OCI-LY7 (cell line): ENCODE measurements at regions of chr6 and their contacts with region 1.

Region 1: GRCh38 chr6:6008648-6009421 is 2.1 kb upstream of the NRN1 start:
- DNase-seq: peak; percentile 95
- H3K4me3 ChIP-seq: peak overlapping the region; percentile 73
- H3K27ac ChIP-seq: peak overlapping the region; percentile 72
- H3K4me1 ChIP-seq: peaks cover 29% of the 10 kb centered on the region
- CTCF ChIP-seq: no peak

Region 2: GRCh38 chr6:4775584-4776494 is 1233.0 kb before region 1 on chr6 and contains the start of gene CDYL:
- CTCF ChIA-PET with region 1: no interaction called
- POLR2A ChIA-PET with region 1: no interaction called
- intact Hi-C with region 1: loop called (anchors 5 kb)
- DNase-seq: peak; percentile 92
- H3K4me3 ChIP-seq: peak within 1 kb of the TSS; percentile 74
- H3K27ac ChIP-seq: peak within 1 kb of the TSS; percentile 37
- H3K4me1 ChIP-seq: peaks cover 26% of the 10 kb centered on the region
- CTCF ChIP-seq: no peak
- total RNA-seq, gene CDYL: 33.6 and 51.4 TPM in 2 replicates

Region 3: GRCh38 chr6:5471044-5471443 is 537.8 kb before region 1 on chr6:
- CTCF ChIA-PET with region 1: no interaction called
- POLR2A ChIA-PET with region 1: interaction called, 3 read pairs
- intact Hi-C with region 1: loop called (anchors 10 kb)
- DNase-seq: peak; percentile 67
- H3K4me3 ChIP-seq: no peak overlapping the region
- H3K27ac ChIP-seq: no peak overlapping the region
- H3K4me1 ChIP-seq: peaks cover 7% of the 10 kb centered on the region
- CTCF ChIP-seq: peak; percentile 98

Region 4: DNA sequence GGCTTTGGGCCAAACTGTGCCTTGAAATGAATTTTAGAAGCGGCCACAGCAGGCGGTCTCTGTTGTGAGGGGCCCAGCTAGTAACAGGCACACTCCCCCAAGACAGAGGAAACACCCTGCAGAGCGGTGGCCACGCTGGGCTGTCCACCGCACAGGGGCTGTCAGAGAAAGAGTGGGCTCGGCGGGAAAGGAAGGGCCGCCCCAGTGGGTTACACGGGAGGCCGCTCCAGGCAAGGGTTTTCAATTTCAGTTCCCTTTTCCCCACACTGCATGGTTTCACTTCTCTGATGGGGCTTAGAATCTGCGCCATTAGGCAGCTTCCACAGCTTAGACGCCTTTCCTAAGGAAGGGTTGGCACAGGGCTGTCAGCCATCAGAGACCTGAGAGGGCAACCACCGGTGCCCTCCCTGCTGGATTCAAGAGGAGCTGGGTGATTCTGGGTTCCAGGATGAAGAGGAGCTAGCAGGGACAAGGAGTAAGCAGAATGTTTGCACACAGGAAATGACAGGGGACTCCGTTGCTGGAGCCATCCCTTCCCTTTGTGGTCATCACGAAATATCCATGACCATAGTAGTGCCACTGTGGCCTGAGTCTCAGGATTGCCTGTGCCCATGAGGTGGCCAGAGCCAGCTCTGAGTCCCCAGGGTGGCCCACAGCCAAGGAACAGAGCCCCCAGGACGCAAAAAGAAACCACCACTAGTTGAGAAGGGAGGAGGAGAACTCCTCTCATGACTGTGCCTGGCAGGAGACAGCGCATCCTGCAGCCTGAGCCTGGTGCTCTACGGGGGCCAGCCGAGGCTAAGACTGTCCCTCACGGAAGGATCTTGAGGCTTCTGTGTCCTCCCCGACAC is 284.8 kb before region 1 on chr6:
- CTCF ChIA-PET with region 1: no interaction called
- POLR2A ChIA-PET with region 1: no interaction called
- intact Hi-C with region 1: loop called (anchors 5 kb)
- DNase-seq: peak; percentile 86
- H3K4me3 ChIP-seq: peak overlapping the region; percentile 67
- H3K27ac ChIP-seq: peak overlapping the region; percentile 23
- H3K4me1 ChIP-seq: peaks cover 52% of the 10 kb centered on the region
- CTCF ChIP-seq: no peak

Region 5: GRCh38 chr6:6686748-6687601 is 678.1 kb after region 1 on chr6:
- CTCF ChIA-PET with region 1: no interaction called
- POLR2A ChIA-PET with region 1: no interaction called
- intact Hi-C with region 1: loop called (anchors 5 kb)
- DNase-seq: peak; percentile 97
- H3K4me3 ChIP-seq: peak overlapping the region; percentile 82
- H3K27ac ChIP-seq: peak overlapping the region; percentile 12
- H3K4me1 ChIP-seq: peaks cover 26% of the 10 kb centered on the region
- CTCF ChIP-seq: no peak

Region 6: DNA sequence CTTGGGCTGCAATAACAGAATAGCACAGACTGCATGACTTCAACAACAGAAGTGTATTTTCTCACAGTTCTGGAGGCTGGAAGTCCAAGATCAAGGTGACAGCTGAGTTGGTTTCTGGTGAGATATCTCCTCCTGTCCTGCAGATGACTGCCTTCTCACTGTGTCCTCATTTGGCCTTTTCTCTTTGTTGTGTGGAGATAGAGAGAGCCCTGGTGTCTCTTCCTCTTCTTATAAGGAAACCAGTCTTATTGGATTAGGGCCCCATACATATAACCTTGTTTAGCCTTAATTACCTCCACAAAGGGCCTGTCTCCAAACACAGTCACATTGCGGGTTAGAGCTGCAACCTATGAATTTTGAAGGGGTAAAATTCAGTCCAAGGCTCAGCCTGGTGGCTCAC is 1660.1 kb after region 1 on chr6:
- CTCF ChIA-PET with region 1: no interaction called
- POLR2A ChIA-PET with region 1: no interaction called
- intact Hi-C with region 1: no loop called
- DNase-seq: no peak
- H3K4me3 ChIP-seq: no peak overlapping the region
- H3K27ac ChIP-seq: no peak overlapping the region
- H3K4me1 ChIP-seq: no peaks in the 10 kb centered on the region
- CTCF ChIP-seq: no peak